ENCODE measurements at regions of chr17 and their contacts with region 1.

Region 1: GRCh38 chr17:57902800-57903759 is 52.1 kb downstream of the CUEDC1 start:
- H3K4me3 Mint-ChIP-seq: peak overlapping the region; percentile 13
- H3K27ac Mint-ChIP-seq: peak overlapping the region; percentile 97
- H3K4me1 Mint-ChIP-seq: peaks cover 90% of the 10 kb centered on the region
- H3K27me3 Mint-ChIP-seq: no peaks in the 10 kb centered on the region

Region 2: DNA sequence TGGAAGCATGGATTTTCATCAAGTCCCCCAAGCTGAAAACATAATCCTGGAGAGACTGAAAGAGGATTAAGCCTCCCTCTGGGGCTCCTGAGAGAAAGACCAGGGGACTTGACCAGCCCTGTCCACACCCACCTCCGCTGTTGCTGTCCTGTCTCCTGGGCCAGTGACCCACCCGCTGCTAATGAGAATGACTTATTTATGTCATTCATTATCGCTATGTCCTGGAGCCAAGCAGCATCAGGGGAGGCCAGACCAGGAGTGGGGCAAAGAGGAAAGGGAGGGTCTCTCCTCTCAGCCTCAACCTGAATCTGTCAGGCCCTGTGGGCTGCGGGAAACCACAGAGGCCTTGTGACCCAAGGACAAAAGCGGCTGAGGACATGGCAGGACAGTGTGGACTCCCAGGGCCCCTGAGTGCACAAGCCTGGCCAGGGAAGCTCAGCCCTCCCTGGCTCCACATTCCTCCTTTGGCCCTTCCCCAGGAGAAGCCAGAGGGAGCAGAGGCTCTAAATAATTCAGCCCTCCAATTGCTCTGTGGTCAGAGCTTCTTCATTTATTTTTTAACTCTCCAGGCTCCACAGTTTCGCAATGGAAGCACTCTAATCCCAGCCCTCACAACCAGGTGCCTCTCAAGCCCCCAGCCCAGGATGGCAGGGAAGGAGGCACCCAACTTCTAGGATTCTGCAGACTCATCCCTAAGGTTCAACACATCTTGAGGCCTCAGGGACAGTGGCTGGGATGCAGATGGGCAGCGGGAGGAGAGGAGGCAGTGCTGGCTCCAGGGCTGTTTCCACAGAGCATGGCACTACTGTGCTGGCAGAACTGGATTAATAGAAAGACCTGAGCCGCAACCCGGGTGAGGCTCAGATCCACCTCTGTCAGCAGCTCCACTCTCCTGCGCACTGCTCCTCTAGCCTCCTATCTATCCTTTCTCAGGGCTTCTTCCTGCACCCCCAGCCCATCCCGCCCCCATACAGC is 33.0 kb after region 1 on chr17:
- intact Hi-C with region 1: no loop called
- H3K4me3 Mint-ChIP-seq: no peak overlapping the region
- H3K27ac Mint-ChIP-seq: peak overlapping the region; percentile 60
- H3K4me1 Mint-ChIP-seq: peaks cover 66% of the 10 kb centered on the region
- H3K27me3 Mint-ChIP-seq: peaks cover 3% of the 10 kb centered on the region

Region 3: DNA sequence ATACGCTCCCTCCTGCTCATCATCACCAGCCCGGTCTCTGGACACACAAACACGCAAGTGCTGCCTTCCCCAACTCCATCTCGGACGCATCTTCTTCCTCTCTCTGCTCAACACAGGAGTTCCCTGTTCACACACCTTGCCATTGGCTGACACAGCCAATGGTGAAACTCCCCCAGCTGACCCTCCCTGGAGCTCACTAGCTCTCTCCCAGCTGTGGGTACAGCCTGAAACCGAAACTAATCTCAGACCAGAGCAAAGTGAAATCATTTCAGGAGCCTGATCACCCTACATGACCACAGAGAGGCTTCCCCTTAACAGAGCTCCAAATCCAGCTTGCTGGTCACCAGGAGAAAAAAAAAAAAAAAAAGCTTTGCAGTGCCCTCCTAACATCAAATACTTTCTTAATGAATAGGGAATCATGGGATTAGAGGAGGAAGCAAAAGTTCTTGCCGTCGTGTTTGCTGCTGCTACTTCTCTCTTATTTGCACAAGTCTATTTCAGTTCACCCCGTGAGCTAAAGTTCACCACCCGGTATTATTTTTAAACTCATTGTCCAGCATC is 43.8 kb after region 1 on chr17:
- intact Hi-C with region 1: loop called (anchors 5 kb)
- H3K4me3 Mint-ChIP-seq: peak overlapping the region; percentile 77
- H3K27ac Mint-ChIP-seq: peak overlapping the region; percentile 87
- H3K4me1 Mint-ChIP-seq: peaks cover 75% of the 10 kb centered on the region
- H3K27me3 Mint-ChIP-seq: no peaks in the 10 kb centered on the region

Region 4: GRCh38 chr17:58006924-58007780 is 104.1 kb after region 1 on chr17 and contains the start of gene SRSF1:
- intact Hi-C with region 1: no loop called
- H3K4me3 Mint-ChIP-seq: peak within 1 kb of the TSS; percentile 97
- H3K27ac Mint-ChIP-seq: peak within 1 kb of the TSS; percentile 96
- H3K4me1 Mint-ChIP-seq: peaks cover 36% of the 10 kb centered on the region
- H3K27me3 Mint-ChIP-seq: no peaks in the 10 kb centered on the region

Measured in dendritic cell treated with granulocyte-macrophage colony-stimulating factor and Interleukin-4, amounts not matched to agents 40 ng/mL and 50 ng/mL, for 4 days (primary cell).